PC-3 (cell line): ENCODE measurements at regions of chr6 and their contacts with region 1.

Region 1: GRCh38 chr6:155188707-155189496 is 74.9 kb upstream of the CLDN20 start:
- DNase-seq: peak; percentile 88
- ATAC-seq: peak; percentile 65
- H3K4me3 ChIP-seq: peak overlapping the region; percentile 60
- H3K27ac ChIP-seq: peak overlapping the region; percentile 98
- H3K4me1 ChIP-seq: peaks cover 43% of the 10 kb centered on the region
- H3K27me3 ChIP-seq: no peaks in the 10 kb centered on the region
- CTCF ChIP-seq: no peak

Region 2: DNA sequence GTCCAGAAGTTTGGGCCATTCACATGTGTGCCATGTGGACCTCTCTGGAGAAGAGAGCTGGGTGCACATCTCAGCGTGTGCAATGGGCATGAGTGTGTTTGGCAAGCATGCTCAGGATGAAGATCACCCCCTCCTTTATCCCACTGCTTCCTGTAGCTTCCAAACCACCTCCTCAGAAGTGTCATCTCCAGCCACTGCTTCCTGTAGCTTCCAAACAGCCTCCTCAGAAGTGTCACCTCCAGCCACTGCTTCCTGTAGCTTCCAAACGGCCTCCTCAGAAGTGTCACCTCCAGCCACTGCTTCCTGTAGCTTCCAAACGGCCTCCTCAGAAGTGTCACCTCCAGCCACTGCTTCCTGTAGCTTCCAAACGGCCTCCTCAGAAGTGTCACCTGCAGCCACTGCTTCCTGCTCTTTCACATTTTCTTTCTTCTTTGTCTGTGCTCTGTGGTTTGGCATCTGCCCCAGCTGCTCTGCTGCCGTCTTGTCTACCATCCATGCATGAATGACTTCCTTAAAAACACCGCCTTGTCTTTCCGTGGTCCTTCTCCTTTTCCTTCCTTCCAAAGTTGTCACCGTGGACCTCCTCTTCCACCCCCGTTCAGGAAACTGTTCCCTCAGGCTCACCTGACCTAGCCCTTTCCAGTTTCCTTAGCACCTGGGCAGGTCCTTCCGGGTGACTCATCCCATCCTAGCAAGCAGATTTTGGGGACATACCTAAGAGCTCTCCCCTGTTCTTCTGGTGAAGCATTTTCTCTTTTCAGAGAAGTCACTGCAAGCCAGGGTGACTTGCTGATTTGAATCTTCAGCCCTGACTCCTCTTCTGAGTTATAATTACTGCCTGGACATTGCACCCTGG is 237.3 kb before region 1 on chr6:
- CTCF ChIA-PET with region 1: no interaction called
- POLR2A ChIA-PET with region 1: no interaction called
- intact Hi-C with region 1: no loop called
- DNase-seq: peak; percentile 10
- ATAC-seq: peak; percentile 37; the same call in 1 of the 2 replicates
- H3K4me3 ChIP-seq: no peak overlapping the region
- H3K27ac ChIP-seq: no peak overlapping the region
- H3K4me1 ChIP-seq: no peaks in the 10 kb centered on the region
- H3K27me3 ChIP-seq: no peaks in the 10 kb centered on the region
- CTCF ChIP-seq: no peak

Region 3: GRCh38 chr6:155014670-155015300 is 174.1 kb before region 1 on chr6:
- CTCF ChIA-PET with region 1: no interaction called
- POLR2A ChIA-PET with region 1: no interaction called
- intact Hi-C with region 1: no loop called
- DNase-seq: peak; percentile 45
- ATAC-seq: peak; percentile 57
- H3K4me3 ChIP-seq: no peak overlapping the region
- H3K27ac ChIP-seq: no peak overlapping the region
- H3K4me1 ChIP-seq: peaks cover 23% of the 10 kb centered on the region
- H3K27me3 ChIP-seq: no peaks in the 10 kb centered on the region
- CTCF ChIP-seq: no peak

Region 4: GRCh38 chr6:155171109-155171746 is 17.7 kb before region 1 on chr6:
- CTCF ChIA-PET with region 1: no interaction called
- POLR2A ChIA-PET with region 1: no interaction called
- intact Hi-C with region 1: no loop called
- DNase-seq: peak; percentile 94
- ATAC-seq: peak; percentile 85
- H3K4me3 ChIP-seq: peak overlapping the region; percentile 26; the same call in 1 of the 2 replicates
- H3K27ac ChIP-seq: peak overlapping the region; percentile 72
- H3K4me1 ChIP-seq: peaks cover 22% of the 10 kb centered on the region
- H3K27me3 ChIP-seq: no peaks in the 10 kb centered on the region
- CTCF ChIP-seq: no peak

Region 5: GRCh38 chr6:155201461-155202226 is 12.7 kb after region 1 on chr6:
- CTCF ChIA-PET with region 1: interaction called, 3 read pairs
- POLR2A ChIA-PET with region 1: no interaction called
- intact Hi-C with region 1: loop called (anchors 1 kb)
- DNase-seq: peak; percentile 88
- ATAC-seq: peak; percentile 87
- H3K4me3 ChIP-seq: peak overlapping the region; percentile 16; the same call in 1 of the 2 replicates
- H3K27ac ChIP-seq: peak overlapping the region; percentile 93
- H3K4me1 ChIP-seq: peaks cover 14% of the 10 kb centered on the region
- H3K27me3 ChIP-seq: no peaks in the 10 kb centered on the region
- CTCF ChIP-seq: no peak

Region 6: DNA sequence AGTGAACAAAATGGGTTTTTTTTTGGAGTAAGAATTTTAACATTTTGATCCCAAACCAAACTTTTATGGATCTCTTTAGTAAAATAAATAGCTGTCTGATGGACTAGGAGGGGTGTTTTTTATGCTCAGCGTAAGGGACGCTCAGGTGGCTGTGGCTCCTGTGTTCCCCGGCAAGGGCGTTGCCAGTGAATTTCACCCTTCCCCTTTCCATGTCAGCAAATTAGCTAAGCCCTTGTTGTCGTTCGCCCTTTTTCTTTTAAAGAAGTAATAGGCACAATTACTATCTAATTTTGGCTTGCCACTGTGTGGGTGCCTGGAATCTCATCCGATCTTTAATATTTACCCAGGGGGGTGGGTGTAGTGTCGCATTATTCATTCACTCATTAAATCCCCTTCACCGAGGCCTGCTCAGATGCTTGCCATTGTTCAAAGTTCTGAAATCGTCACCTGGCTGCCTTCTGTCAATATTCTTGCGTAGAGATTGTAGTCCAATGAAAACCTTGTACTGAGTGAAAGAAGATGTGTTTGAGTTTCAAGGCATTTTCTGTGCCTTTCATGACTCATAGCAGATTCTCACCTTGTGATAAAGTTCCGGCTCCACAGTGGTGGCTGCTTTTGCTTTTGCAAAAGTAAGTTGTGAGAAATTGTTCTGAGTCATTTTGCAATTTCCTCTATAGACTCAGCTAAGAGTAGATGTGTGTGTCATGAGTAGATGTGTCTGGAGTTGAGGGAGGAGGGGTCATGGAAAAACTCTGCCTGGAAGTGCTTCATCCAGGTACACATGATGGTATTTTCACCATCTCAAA is 34.9 kb after region 1 on chr6:
- CTCF ChIA-PET with region 1: no interaction called
- POLR2A ChIA-PET with region 1: no interaction called
- intact Hi-C with region 1: loop called (anchors 1 kb)
- DNase-seq: peak; percentile 93
- ATAC-seq: peak; percentile 98
- H3K4me3 ChIP-seq: no peak overlapping the region
- H3K27ac ChIP-seq: peak overlapping the region; percentile 90
- H3K4me1 ChIP-seq: peaks cover 15% of the 10 kb centered on the region
- H3K27me3 ChIP-seq: no peaks in the 10 kb centered on the region
- CTCF ChIP-seq: no peak

Region 7: GRCh38 chr6:155314092-155314772 is 125.3 kb after region 1 on chr6 and contains the start of gene TFB1M:
- CTCF ChIA-PET with region 1: no interaction called
- POLR2A ChIA-PET with region 1: no interaction called
- intact Hi-C with region 1: loop called (anchors 2 kb)
- DNase-seq: peak; percentile 98
- ATAC-seq: peak; percentile 92
- H3K4me3 ChIP-seq: peak within 1 kb of the TSS; percentile 89
- H3K27ac ChIP-seq: peak within 1 kb of the TSS; percentile 84
- H3K4me1 ChIP-seq: peaks cover 38% of the 10 kb centered on the region
- H3K27me3 ChIP-seq: no peaks in the 10 kb centered on the region
- CTCF ChIP-seq: no peak
- total RNA-seq, gene TFB1M: 23.1 and 25.6 TPM in 2 replicates

Region 8: DNA sequence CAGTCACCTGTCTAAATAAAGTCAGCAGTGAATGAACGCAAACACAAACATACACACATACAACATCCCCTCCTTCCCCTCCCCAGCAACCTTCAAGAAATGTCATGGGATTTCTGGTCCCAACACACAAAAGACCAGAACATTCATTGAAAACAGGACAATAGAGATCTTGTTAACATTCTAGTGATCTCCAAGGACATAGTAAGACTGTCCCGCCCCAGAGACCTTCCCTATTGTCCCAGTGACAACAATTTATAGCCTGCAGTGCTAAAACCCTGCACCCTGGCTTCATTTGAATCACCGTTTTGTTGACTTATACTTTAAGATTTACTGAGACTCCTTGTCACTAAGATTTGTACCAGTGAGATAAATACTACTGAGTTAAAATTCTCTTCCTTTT is 410.7 kb after region 1 on chr6:
- CTCF ChIA-PET with region 1: no interaction called
- POLR2A ChIA-PET with region 1: no interaction called
- intact Hi-C with region 1: no loop called
- DNase-seq: no peak
- ATAC-seq: no peak
- H3K4me3 ChIP-seq: no peak overlapping the region
- H3K27ac ChIP-seq: no peak overlapping the region
- H3K4me1 ChIP-seq: no peaks in the 10 kb centered on the region
- H3K27me3 ChIP-seq: no peaks in the 10 kb centered on the region
- CTCF ChIP-seq: no peak